Activated CD4-positive, alpha-beta memory T cell treated with anti-CD3 and anti-CD28 coated beads for 36 hours (primary cell): ENCODE measurements at regions of chr10 and their contacts with region 1.

Region 1: GRCh38 chr10:67849331-67850011 is 11.5 kb upstream of the DNAJC12 start:
- DNase-seq: peak; percentile 98
- H3K4me3 Mint-ChIP-seq: peak overlapping the region; percentile 91
- H3K27ac Mint-ChIP-seq: peak overlapping the region; percentile 98
- H3K4me1 Mint-ChIP-seq: peaks cover 13% of the 10 kb centered on the region
- H3K27me3 Mint-ChIP-seq: no peaks in the 10 kb centered on the region

Region 2: DNA sequence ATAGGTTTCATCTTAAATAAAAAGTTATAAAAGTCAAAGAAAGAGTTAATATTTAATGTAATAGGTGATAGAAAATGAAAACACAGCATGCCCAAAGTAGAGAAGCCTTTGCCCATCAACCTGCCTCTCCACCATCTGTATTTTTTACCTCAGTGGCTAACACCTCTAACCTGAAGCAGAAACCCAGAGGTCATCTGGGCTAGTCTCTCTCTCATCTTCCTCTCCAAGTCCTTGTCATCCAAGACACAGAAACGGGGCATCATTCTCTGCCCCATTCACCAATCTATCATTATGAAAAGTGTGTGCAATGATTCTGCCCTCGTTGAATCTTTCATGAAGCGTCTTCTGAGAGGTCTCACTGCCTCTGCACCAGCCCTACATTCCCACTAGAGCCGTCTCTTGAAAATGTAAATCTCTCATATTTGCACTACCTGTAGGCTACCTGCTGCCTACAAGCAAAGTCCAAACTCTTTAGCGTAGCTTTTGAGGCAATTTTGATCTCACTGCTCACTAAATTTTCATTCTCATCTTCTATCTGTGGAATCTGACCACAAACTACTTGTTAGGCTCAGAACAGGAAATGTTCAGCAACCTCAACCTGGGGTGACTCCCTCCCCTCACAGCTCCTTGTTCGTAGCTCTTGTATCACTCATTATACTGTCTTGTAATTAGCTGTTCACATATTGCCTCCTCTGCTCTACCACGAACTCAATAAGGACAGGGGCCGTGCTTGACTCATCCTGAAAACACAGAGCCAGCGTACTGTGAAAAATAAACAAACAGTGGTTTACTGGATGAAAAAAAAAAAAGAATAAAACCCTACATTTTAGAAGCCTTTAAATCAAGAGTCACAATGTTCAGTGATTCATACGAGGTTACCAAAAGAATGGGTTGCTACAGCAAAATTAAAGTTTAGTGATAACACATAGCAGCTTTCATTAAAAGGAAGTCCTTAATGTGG is 236.6 kb before region 1 on chr10:
- CTCF ChIA-PET with region 1: no interaction called
- POLR2A ChIA-PET with region 1: no interaction called
- intact Hi-C with region 1: loop called (anchors 1 kb)
- DNase-seq: peak; percentile 82
- H3K4me3 Mint-ChIP-seq: peak overlapping the region; percentile 2
- H3K27ac Mint-ChIP-seq: peak overlapping the region; percentile 65
- H3K4me1 Mint-ChIP-seq: peaks cover 25% of the 10 kb centered on the region
- H3K27me3 Mint-ChIP-seq: no peaks in the 10 kb centered on the region

Region 3: GRCh38 chr10:67788025-67788886 is 61.2 kb before region 1 on chr10:
- CTCF ChIA-PET with region 1: interaction called, 34 read pairs
- POLR2A ChIA-PET with region 1: interaction called, 5 read pairs
- intact Hi-C with region 1: loop called (anchors 1 kb)
- DNase-seq: peak; percentile 91
- H3K4me3 Mint-ChIP-seq: no peak overlapping the region
- H3K27ac Mint-ChIP-seq: peak overlapping the region; percentile 11
- H3K4me1 Mint-ChIP-seq: peaks cover 57% of the 10 kb centered on the region
- H3K27me3 Mint-ChIP-seq: no peaks in the 10 kb centered on the region

Region 4: DNA sequence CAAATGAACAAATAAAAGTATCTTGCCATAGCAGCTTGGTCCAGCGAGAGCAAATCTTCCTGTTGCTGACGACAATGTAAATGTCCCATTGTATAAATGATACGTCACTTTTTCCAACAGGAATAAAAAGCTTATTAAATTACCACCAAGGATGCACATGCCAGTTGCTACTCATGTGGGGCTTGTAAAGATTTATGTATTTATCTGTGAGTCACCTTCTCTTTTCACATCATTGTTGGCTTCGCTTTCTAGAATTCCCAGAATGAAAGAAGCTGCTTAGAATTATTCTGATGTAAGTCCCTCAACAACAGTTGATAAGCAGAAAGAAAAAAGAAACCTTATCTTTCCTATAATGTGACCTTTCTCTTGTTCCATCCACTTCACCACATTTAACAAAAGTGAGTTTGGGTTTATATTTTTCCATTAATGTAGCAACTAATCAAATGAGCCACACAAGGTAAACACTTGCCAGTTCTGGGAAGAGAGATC is 33.9 kb before region 1 on chr10:
- CTCF ChIA-PET with region 1: interaction called, 3 read pairs
- POLR2A ChIA-PET with region 1: interaction called, 4 read pairs
- intact Hi-C with region 1: loop called (anchors 1 kb)
- DNase-seq: no peak
- H3K4me3 Mint-ChIP-seq: no peak overlapping the region
- H3K27ac Mint-ChIP-seq: peak overlapping the region; percentile 76
- H3K4me1 Mint-ChIP-seq: peaks cover 28% of the 10 kb centered on the region
- H3K27me3 Mint-ChIP-seq: peaks cover 3% of the 10 kb centered on the region

Region 5: DNA sequence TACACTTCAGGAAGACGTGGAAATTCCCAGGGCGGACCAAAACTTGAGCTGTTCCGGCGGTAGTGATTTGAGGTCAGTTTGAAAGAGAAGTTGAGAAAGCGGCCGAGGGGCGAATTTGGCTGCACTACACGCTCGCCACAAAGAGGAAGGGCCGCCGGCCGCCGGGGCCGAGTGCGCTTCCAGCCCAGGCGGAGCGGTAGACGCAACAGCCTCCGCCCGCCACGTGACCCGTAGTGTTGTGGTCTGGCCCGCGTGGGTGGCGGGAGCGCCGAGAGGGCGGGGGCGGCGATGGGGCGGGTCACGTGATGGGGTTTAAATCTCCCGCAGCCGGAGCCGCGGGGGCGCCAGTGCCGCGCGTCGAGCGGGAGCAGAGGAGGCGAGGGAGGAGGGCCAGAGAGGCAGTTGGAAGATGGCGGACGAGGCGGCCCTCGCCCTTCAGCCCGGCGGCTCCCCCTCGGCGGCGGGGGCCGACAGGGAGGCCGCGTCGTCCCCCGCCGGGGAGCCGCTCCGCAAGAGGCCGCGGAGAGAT is 34.9 kb after region 1 on chr10 and contains the start of gene SIRT1:
- CTCF ChIA-PET with region 1: interaction called, 8 read pairs
- POLR2A ChIA-PET with region 1: interaction called, 3 read pairs
- intact Hi-C with region 1: loop called (anchors 1 kb)
- DNase-seq: peak; percentile 93
- H3K4me3 Mint-ChIP-seq: peak within 1 kb of the TSS; percentile 93
- H3K27ac Mint-ChIP-seq: peak within 1 kb of the TSS; percentile 88
- H3K4me1 Mint-ChIP-seq: peaks cover 28% of the 10 kb centered on the region
- H3K27me3 Mint-ChIP-seq: no peaks in the 10 kb centered on the region
- total RNA-seq, gene SIRT1: 29.9 to 32.0 TPM

Region 6: DNA sequence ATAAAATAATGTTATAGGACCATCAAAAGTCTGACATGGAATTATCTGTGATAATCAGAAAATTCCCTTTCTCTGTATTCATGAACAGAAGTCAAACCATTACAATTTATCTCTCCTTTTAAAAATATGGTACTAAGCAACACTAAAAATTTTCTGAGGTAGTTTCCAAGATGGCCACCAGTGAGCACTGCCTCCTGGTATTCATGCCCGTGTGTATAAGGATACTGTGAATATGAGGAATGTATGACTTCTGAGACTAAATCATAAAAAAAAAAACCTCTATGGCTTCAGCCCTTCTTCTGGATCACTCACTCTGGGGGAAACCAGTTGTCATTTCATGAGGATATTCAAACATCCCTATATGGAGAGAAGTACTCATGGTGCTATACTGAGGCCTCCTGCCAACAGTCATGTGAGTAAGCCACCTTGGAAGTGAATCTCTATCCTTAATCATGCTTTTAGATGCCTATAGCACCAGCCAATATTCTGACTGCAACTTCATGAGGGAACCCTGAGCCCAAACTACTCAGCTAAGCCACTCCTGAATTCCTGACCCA is 76.1 kb after region 1 on chr10:
- CTCF ChIA-PET with region 1: no interaction called
- POLR2A ChIA-PET with region 1: no interaction called
- intact Hi-C with region 1: no loop called
- DNase-seq: no peak
- H3K4me3 Mint-ChIP-seq: no peak overlapping the region
- H3K27ac Mint-ChIP-seq: no peak overlapping the region
- H3K4me1 Mint-ChIP-seq: no peaks in the 10 kb centered on the region
- H3K27me3 Mint-ChIP-seq: no peaks in the 10 kb centered on the region

Region 7: GRCh38 chr10:68156373-68157185 is 307.1 kb after region 1 on chr10:
- CTCF ChIA-PET with region 1: interaction called, 128 read pairs
- POLR2A ChIA-PET with region 1: no interaction called
- intact Hi-C with region 1: no loop called
- DNase-seq: peak; percentile 64
- H3K4me3 Mint-ChIP-seq: no peak overlapping the region
- H3K27ac Mint-ChIP-seq: no peak overlapping the region
- H3K4me1 Mint-ChIP-seq: peaks cover 1% of the 10 kb centered on the region
- H3K27me3 Mint-ChIP-seq: peaks cover 2% of the 10 kb centered on the region

Region 8: DNA sequence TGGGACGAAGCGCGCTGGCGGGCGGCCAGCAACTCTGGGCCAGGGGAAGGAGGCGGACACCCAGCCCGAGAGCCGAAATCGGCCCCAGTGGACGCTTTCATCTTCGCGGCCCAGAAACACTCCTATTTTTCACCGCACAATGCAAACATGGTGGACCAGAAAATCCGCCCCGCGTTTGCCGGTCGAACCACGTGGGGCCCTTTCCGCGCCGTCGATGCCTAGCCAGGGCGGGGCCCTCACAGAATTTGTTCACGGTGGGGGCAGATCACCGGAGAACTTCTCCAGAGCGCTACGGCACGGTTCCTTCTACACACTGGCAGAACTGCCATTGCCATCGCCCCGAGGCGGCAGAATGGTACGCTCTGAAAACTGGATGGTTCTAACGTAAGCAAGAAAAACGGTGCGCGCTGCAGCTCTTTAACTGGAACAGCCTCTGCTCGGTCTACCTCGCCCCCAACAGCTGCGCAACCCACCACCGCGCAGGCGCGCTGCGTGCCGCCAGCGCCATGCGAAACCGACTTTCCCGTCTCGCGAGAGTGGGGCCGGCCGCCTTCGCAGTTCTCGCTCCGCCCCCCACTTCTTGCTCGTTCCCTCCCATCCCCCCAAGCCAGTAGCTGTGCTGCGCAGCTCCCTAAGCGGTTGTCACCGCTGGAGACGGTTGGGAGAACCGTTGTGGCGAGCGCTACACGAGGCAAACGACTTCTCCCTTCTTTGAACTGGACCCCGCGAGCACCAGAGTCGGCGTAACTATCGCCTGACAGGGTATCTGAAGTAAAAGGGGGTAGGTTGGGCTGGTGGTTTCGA is 482.2 kb after region 1 on chr10 and contains the start of gene HNRNPH3:
- CTCF ChIA-PET with region 1: interaction called, 3 read pairs
- POLR2A ChIA-PET with region 1: interaction called, 9 read pairs
- intact Hi-C with region 1: loop called (anchors 1 kb)
- DNase-seq: peak; percentile 99
- H3K4me3 Mint-ChIP-seq: peak within 1 kb of the TSS; percentile 100
- H3K27ac Mint-ChIP-seq: peak within 1 kb of the TSS; percentile 100
- H3K4me1 Mint-ChIP-seq: peaks cover 34% of the 10 kb centered on the region
- H3K27me3 Mint-ChIP-seq: peaks cover 3% of the 10 kb centered on the region
- total RNA-seq, gene HNRNPH3: 140 to 144 TPM